ENCODE measurements at regions of chr16 and their contacts with region 1.

Region 1: DNA sequence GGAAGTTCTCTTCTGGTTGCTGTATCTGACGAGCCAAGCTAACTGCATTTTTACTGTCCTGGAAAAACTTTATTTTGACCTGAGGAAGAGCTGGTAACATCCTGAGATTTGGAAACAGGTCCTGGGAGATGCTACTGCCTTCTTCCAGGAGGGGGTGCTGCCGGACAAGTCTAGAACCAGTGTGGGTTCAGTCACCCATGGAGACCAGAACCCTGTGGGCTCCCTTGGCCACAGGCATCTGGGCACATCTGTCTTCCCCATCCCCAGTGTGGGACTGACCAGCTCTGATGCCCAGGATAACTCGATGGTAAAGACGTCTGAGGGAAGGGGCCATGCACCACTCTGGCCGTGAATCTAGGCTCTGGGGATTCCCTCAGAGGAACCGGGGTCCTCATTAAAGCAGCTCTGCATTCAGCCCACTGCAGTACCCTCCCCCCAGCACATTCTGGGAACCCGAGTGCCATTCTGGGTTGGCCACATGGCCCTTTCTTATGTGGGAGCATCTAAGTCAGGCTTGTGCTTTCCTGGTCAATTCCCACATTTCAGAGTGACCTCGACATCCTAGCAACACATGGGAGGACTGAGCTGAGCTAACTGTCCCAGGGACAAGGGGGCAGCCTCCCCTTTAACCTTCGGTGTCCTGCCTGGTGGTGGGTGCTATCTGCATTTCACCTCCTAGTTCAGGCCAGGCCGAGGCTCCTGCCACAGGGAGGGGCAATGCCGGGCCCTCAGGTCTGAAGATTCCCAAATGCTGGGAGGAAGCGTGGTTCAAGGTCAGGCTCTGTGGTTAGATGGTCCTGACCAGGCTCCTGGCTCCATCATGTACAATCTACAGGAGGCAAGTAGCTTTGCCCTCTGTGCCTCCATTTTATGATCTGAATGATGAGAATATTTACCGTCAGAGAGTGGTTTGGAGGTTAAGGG is 6.4 kb downstream of the C16orf86 start:
- DNase-seq: peak in 4 of 5 donors; percentile 62 to 75 (median 75)
- ATAC-seq: peak; percentile 36 to 69 (median 53)
- H3K4me3 ChIP-seq: peak overlapping the region in 1 of 12 donors; percentile 12
- H3K27ac ChIP-seq: peak overlapping the region; percentile 47 to 91 (median 76)
- H3K4me1 ChIP-seq: peaks cover 8 to 45% (median 26%) of the 10 kb centered on the region in 12 donors
- H3K27me3 ChIP-seq: no peaks in the 10 kb centered on the region
- CTCF ChIP-seq: peak; percentile 65 to 83 (median 76)
- POLR2A ChIP-seq: no peak

Region 2: GRCh38 chr16:67653128-67653786 is 19.7 kb before region 1 on chr16:
- intact Hi-C with region 1: no loop called
- DNase-seq: peak in 1 of 5 donors; percentile 60
- ATAC-seq: no peak
- H3K4me3 ChIP-seq: peak overlapping the region; percentile 16 to 56 (median 42)
- H3K27ac ChIP-seq: no peak overlapping the region
- H3K4me1 ChIP-seq: peaks cover 0 to 31% (median 9%) of the 10 kb centered on the region in 12 donors
- H3K27me3 ChIP-seq: peaks cover 24 to 68% (median 47%) of the 10 kb centered on the region in 9 donors
- CTCF ChIP-seq: peak in 2 of 12 donors; percentile 8 to 30
- POLR2A ChIP-seq: no peak

Region 3: GRCh38 chr16:67806428-67807147 is 133.6 kb after region 1 on chr16 and contains the starts of genes RANBP10 and TSNAXIP1:
- intact Hi-C with region 1: loop called in 8 of 10 experiments (anchors 2 to 10 kb)
- DNase-seq: peak; percentile 97 to 98 (median 98)
- ATAC-seq: peak; percentile 98 to 99 (median 98)
- H3K4me3 ChIP-seq: peak within 1 kb of the TSS; percentile 62 to 98 (median 80)
- H3K27ac ChIP-seq: peak within 1 kb of the TSS in 11 of 12 donors; percentile 68 to 93 (median 84)
- H3K4me1 ChIP-seq: peaks cover 0 to 39% (median 17%) of the 10 kb centered on the region in 12 donors
- H3K27me3 ChIP-seq: no peaks in the 10 kb centered on the region
- CTCF ChIP-seq: no peak
- POLR2A ChIP-seq: peak in 1 of 2 donors; percentile 91
- total RNA-seq, gene RANBP10: 7.1 to 19.7 (median 12.3) TPM
- total RNA-seq, gene TSNAXIP1: 0.16 to 0.93 (median 0.46) TPM in 8 of 9 donors, not detected in the other

Region 4: GRCh38 chr16:67825119-67825518 is 152.1 kb after region 1 on chr16:
- intact Hi-C with region 1: loop called in 3 of 10 experiments (anchors 5 to 10 kb)
- DNase-seq: peak in 1 of 5 donors; percentile 11
- ATAC-seq: no peak
- H3K4me3 ChIP-seq: no peak overlapping the region
- H3K27ac ChIP-seq: no peak overlapping the region
- H3K4me1 ChIP-seq: no peaks in the 10 kb centered on the region
- H3K27me3 ChIP-seq: no peaks in the 10 kb centered on the region
- CTCF ChIP-seq: no peak
- POLR2A ChIP-seq: no peak

Region 5: DNA sequence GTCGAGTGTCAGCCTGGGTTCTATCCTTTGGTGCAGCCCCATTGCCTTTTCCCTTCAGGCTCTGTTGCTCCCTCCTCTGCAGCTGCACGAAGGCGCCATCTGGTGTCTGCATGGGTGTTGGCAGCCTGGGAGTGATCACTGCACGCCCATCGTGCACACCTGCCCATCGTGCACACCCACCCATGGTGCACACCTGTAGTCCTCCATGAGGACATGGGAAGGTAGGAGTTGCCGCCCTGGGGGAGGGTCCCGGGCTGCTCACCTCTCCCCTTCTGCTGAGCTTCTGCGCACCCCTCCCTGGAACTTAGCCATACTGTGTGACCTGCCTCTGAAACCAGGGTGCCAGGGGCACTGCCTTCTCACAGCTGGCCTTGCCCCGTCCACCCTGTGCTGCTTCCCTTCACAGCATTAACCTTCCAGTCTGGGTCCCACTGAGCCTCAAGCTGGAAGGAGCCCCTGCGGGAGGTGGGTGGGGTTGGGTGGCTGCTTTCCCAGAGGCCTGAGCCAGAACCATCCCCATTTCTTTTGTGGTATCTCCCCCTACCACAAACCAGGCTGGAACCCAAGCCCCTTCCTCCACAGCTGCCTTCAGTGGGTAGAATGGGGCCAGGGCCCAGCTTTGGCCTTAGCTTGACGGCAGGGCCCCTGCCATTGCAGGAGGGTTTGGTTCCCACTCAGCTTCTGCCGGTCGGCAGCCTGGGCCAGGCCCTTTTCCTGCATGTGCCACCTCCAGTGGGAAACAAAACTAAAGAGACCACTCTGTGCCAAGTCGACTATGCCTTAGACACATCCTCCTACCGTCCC is 255.8 kb after region 1 on chr16:
- intact Hi-C with region 1: loop called in 8 of 10 experiments (anchors 2 to 10 kb)
- DNase-seq: peak; percentile 63 to 86 (median 73)
- ATAC-seq: peak; percentile 37 to 69 (median 62)
- H3K4me3 ChIP-seq: no peak overlapping the region
- H3K27ac ChIP-seq: no peak overlapping the region
- H3K4me1 ChIP-seq: peaks cover 0 to 34% (median 15%) of the 10 kb centered on the region in 12 donors
- H3K27me3 ChIP-seq: no peaks in the 10 kb centered on the region
- CTCF ChIP-seq: peak; percentile 72 to 87 (median 83)
- POLR2A ChIP-seq: no peak

Region 6: GRCh38 chr16:68040507-68041288 is 367.7 kb after region 1 on chr16:
- intact Hi-C with region 1: loop called in 2 of 10 experiments (anchors 10 kb)
- DNase-seq: peak; percentile 76 to 92 (median 84)
- ATAC-seq: peak; percentile 84 to 95 (median 94)
- H3K4me3 ChIP-seq: no peak overlapping the region
- H3K27ac ChIP-seq: peak overlapping the region in 1 of 12 donors; percentile 72
- H3K4me1 ChIP-seq: peaks cover 0 to 42% (median 0%) of the 10 kb centered on the region in 12 donors
- H3K27me3 ChIP-seq: no peaks in the 10 kb centered on the region
- CTCF ChIP-seq: peak; percentile 70 to 89 (median 82)
- POLR2A ChIP-seq: no peak

Region 7: GRCh38 chr16:68064791-68065365 is 391.9 kb after region 1 on chr16:
- intact Hi-C with region 1: loop called in 1 of 10 experiments (anchors 10 kb)
- DNase-seq: peak; percentile 59 to 82 (median 75)
- ATAC-seq: peak; percentile 49 to 80 (median 78)
- H3K4me3 ChIP-seq: no peak overlapping the region
- H3K27ac ChIP-seq: peak overlapping the region in 10 of 12 donors; percentile 5 to 76 (median 32)
- H3K4me1 ChIP-seq: peaks cover 0 to 49% (median 19%) of the 10 kb centered on the region in 12 donors
- H3K27me3 ChIP-seq: no peaks in the 10 kb centered on the region
- CTCF ChIP-seq: peak; percentile 67 to 87 (median 79)
- POLR2A ChIP-seq: no peak